Left cardiac atrium (tissue), 4 donors: ENCODE measurements at regions of chr11 and their contacts with region 1.

Region 1: GRCh38 chr11:90288212-90288821 is 65.5 kb upstream of the CHORDC1 start:
- DNase-seq: no peak
- ATAC-seq: no peak

Region 2: GRCh38 chr11:90364527-90364926 is 76.2 kb after region 1 on chr11:
- intact Hi-C with region 1: no loop called
- DNase-seq: no peak
- ATAC-seq: no peak

Region 3: GRCh38 chr11:90453525-90453924 is 165.2 kb after region 1 on chr11:
- intact Hi-C with region 1: loop called in 1 of 2 experiments (anchors 2 kb)
- DNase-seq: no peak
- ATAC-seq: no peak

Region 4: GRCh38 chr11:90468923-90469322 is 180.6 kb after region 1 on chr11:
- intact Hi-C with region 1: loop called in 1 of 2 experiments (anchors 10 kb)
- DNase-seq: no peak
- ATAC-seq: peak; percentile 57 to 71

Region 5: DNA sequence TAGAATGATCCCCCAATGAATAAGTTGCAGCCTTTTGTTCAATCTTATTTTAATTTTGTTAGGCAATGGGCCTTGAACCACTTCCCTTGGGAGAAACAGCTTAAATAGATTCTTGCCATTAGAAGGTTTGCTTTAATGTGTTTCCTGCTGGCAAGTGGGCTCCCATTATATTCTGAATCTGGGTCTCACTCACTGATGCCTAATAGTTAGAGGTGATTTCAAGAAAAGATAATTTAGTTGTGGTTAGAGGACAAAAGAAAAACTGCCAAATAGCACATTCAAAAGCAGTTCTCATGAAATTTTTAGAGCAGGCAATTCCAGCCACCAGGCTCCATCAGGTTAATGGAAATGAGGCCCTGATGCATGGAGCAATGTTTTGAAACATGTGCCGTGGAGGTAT is 297.2 kb after region 1 on chr11:
- intact Hi-C with region 1: no loop called
- DNase-seq: no peak
- ATAC-seq: no peak